MCF 10A (cell line): ENCODE measurements at regions of chr1 and their contacts with region 1.

Region 1: DNA sequence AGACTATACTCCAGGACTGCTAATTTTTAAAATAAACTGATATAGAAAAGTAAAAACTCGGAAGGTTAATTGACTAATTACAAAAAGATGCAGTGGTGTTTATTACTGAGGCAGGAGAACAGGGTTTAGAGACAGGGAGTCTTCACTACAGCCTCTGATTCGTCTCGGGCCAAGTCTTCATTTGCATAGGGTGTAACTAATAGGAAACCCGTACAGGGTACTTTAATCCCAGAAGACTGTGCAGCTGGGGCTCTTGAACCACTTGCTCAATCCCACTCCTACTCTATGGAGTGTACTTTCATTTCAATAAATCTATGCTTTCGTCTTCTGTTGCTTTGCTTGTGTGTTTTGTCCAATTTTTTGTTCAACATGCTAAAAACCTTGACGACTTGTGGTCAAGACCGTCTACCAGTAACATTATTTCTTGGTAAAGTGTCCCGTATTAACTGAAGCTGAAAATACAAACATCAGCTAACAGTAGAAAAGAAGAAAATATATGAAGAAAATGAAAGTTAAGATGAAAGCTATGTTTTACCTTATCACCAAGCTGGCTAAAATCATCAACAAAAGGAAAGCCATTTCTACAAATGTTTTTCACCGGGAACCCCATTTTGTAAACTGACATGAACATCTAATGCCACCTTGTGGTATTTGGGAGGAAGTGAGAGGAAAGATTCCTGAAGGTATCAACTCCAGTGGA is 8.0 kb downstream of the SDHB start:
- DNase-seq: peak; percentile 71
- H3K4me3 Mint-ChIP-seq: no peak overlapping the region
- H3K27ac Mint-ChIP-seq: peak overlapping the region; percentile 72
- H3K4me1 Mint-ChIP-seq: peaks cover 11% of the 10 kb centered on the region
- H3K27me3 Mint-ChIP-seq: no peaks in the 10 kb centered on the region
- CTCF ChIP-seq: peak; percentile 75

Region 2: DNA sequence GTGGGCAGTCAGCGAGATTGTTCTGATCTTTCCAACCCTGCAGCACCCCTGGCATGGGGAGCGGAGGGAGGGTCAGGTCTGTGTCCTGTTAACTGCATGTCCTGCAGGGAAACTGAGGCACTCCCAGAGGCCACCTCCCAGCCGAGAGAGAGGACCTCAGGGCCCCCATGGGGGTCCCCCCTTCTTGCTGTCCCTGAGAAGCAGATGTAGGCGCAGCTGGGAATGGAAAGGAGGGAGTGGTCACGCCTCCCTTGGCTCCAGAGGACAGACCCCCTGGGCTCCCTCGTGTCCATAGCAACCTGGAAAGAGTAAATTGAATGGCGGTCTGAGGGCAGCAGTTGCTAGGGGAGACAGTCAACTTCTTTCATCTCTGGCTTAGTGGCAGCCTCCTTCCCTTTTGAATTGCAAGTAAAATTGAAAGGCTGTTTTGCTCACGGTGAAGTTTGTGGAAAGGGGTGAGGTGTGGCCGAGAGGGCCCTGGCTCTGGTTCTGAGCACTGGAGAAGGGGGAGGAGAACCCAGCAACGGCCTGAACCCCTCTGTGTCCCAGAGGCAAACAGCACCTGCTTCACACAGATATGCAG is 119.2 kb before region 1 on chr1:
- CTCF ChIA-PET with region 1: interaction called, 11 read pairs
- POLR2A ChIA-PET with region 1: interaction called, 3 read pairs
- intact Hi-C with region 1: no loop called
- DNase-seq: no peak
- H3K4me3 Mint-ChIP-seq: no peak overlapping the region
- H3K27ac Mint-ChIP-seq: peak overlapping the region; percentile 36
- H3K4me1 Mint-ChIP-seq: peaks cover 35% of the 10 kb centered on the region
- H3K27me3 Mint-ChIP-seq: no peaks in the 10 kb centered on the region
- CTCF ChIP-seq: no peak

Region 3: GRCh38 chr1:16960560-16961296 is 85.1 kb before region 1 on chr1:
- CTCF ChIA-PET with region 1: interaction called, 7 read pairs
- POLR2A ChIA-PET with region 1: no interaction called
- intact Hi-C with region 1: loop called (anchors 1 kb)
- DNase-seq: no peak
- H3K4me3 Mint-ChIP-seq: no peak overlapping the region
- H3K27ac Mint-ChIP-seq: no peak overlapping the region
- H3K4me1 Mint-ChIP-seq: no peaks in the 10 kb centered on the region
- H3K27me3 Mint-ChIP-seq: no peaks in the 10 kb centered on the region
- CTCF ChIP-seq: no peak

Region 4: GRCh38 chr1:17027403-17027802 is 18.4 kb before region 1 on chr1:
- CTCF ChIA-PET with region 1: interaction called, 56 read pairs
- POLR2A ChIA-PET with region 1: interaction called, 9 read pairs
- intact Hi-C with region 1: no loop called
- DNase-seq: peak; percentile 88
- H3K4me3 Mint-ChIP-seq: peak overlapping the region; percentile 34
- H3K27ac Mint-ChIP-seq: peak overlapping the region; percentile 36
- H3K4me1 Mint-ChIP-seq: peaks cover 16% of the 10 kb centered on the region
- H3K27me3 Mint-ChIP-seq: no peaks in the 10 kb centered on the region
- CTCF ChIP-seq: no peak